ENCODE measurements at regions of chr3 and their contacts with region 1.

Region 1: GRCh38 chr3:41863024-41863423 is 98.9 kb downstream of the ULK4 start:
- DNase-seq: no peak
- H3K4me3 ChIP-seq: no peak overlapping the region
- H3K27me3 ChIP-seq: no peaks in the 10 kb centered on the region
- CTCF ChIP-seq: no peak

Region 2: GRCh38 chr3:41196499-41197410 is 666.3 kb before region 1 on chr3:
- CTCF ChIA-PET with region 1: no interaction called
- POLR2A ChIA-PET with region 1: interaction called, 11 read pairs
- DNase-seq: no peak
- H3K4me3 ChIP-seq: no peak overlapping the region
- H3K27me3 ChIP-seq: no peaks in the 10 kb centered on the region
- CTCF ChIP-seq: no peak

Region 3: DNA sequence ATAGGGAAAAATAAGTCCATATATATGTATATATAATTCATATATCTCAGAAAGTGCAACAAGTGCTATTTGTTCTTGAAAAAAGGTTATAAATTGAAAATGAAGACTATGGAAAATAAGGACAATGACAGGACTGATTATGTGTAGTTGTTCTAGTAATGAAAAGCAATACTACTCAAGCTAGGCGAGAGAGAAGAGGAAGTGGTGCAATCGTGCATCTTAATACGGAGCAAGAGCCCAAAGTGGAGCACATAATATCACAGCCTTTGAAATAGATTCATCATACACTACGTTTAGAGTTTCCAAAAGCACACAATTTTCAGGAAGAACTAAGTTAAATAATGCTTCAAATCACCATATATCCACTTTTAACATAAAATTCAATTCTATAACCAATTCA is 11.0 kb after region 1 on chr3:
- CTCF ChIA-PET with region 1: no interaction called
- POLR2A ChIA-PET with region 1: no interaction called
- DNase-seq: no peak
- H3K4me3 ChIP-seq: no peak overlapping the region
- H3K27me3 ChIP-seq: no peaks in the 10 kb centered on the region
- CTCF ChIP-seq: no peak